Caki2 (cell line): ENCODE measurements at regions of chr17 and their contacts with region 1.

Region 1: DNA sequence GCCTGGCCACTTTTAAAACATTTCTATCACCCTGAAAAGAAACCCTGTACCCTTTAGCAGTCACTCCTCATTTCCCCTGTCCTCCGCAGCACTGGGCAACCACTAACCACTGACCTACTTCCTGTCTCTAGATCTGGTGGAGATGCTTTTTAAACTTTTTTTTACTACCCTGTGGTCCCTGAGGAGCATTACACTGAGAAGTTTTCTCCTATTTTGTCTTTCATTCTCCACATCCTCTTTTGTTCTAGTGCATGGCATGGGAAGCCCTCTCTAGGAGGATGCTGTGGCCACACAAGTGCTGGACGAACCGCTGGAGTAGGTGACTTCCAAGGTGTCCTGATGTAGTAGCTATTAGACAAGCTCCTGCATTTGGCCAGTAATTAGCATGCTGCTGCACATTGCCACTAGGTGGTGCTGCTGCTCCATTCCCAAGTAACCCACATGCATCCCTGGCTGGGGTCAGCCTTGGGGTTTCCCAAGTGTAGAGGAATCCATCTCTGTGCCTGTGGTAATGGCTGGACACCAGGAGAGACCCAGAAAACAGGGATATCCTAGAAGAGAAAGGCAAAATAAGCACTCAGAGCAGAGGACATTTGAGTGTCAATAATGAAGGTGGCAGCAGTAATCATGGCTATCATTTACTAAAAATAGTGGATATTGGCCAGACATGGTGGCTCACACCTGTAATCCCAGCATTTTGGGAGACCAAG is 143.8 kb upstream of the CRHR1 start:
- DNase-seq: peak; percentile 52

Region 2: DNA sequence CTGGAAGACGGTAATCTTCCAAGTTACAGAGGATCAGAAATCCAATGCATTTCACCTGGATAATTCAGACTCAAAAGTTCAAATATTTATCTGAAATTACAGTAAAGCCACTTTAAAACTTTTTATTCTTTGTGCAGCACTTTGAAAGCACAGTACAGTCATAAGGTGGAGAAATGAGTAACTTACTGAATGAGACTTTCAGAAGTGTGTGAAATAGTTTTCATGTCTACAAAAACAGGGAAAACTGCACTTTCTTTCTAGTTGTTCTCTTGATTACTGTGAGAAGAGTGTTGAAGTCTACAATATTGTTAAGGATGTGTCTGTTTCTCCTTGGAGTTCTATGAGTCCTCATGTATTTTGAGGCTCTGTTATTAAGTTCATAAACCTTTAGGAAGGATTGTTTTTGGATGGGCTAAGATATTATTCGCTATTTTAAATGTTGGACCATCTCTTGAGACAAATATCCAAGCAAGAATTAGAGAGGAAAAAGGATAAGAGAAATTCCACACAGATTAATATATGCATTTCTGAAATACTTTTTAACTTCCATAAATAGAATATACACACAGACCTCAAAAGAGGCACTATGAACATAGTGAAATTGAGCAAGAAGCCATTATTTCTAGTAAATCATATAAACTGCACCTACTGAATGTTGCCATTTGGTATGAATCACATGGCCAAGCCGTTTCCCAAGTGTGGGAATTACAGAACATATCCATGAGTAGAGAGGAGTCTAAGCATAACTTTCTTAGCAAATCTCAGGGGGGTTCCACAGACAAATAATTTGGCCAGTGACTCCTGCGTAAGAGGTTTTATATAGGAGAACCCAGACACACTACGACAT is 66.1 kb before region 1 on chr17:
- in situ Hi-C with region 1: no loop called
- DNase-seq: no peak

Region 3: DNA sequence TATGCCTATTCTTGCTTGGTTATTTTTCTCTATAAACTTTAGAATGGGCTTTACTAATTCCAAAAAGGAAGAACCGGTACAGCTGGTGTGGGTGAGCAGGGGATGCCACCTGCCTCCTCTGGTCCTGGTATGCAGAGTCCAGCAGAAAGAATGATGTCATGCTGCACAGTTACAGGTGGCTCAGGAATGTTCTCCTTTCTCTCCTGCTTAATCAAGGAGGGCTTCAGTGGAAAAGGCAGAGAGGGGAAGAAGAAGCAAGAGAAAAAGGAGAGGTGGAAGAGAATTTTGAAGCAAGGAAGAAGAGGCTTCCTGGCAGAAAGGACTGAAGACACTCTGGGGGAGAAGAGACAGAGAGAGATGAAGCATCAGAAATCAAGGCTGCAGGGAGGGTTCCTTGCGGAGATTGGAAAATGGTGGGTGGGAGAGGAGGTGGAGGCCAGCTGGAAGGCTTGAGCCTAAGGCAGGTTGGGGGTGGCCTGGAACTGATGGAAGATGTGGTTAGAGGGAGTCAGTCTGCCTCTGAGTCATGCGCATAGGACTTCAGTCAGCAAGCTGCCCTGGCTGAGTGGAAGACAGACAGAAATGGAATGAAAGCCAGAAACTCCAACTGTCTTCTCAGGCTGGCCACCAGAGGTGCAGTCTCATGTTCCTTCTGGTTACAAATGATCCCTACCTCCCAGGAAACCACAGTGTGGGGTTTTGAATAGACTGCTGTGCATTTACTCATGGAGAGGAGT is 79.2 kb after region 1 on chr17:
- in situ Hi-C with region 1: no loop called
- DNase-seq: peak; percentile 67

Region 4: GRCh38 chr17:45740553-45741330 is 100.4 kb after region 1 on chr17:
- in situ Hi-C with region 1: loop called (anchors 25 kb)
- DNase-seq: peak; percentile 96